Natural killer cell (primary cell): ENCODE measurements at regions of chr4 and their contacts with region 1.

Region 1: GRCh38 chr4:77782102-77782835 is 36.9 kb downstream of the CNOT6L start:
- DNase-seq: no peak
- ATAC-seq: no peak
- H3K4me3 ChIP-seq: no peak overlapping the region
- H3K4me3 Mint-ChIP-seq: peak overlapping the region; percentile 35
- H3K27ac ChIP-seq: peak overlapping the region; percentile 2
- H3K27ac Mint-ChIP-seq: peak overlapping the region; percentile 77 to 86
- H3K4me1 ChIP-seq: peaks cover 15% of the 10 kb centered on the region
- H3K4me1 Mint-ChIP-seq: peaks cover 68 to 72% of the 10 kb centered on the region in 2 donors
- H3K27me3 ChIP-seq: no peaks in the 10 kb centered on the region
- H3K27me3 Mint-ChIP-seq: no peaks in the 10 kb centered on the region
- CTCF ChIP-seq: no peak

Region 2: GRCh38 chr4:77745792-77746191 is 36.5 kb before region 1 on chr4:
- intact Hi-C with region 1: loop called (anchors 5 kb)
- DNase-seq: no peak
- ATAC-seq: no peak
- H3K4me3 ChIP-seq: no peak overlapping the region
- H3K4me3 Mint-ChIP-seq: no peak overlapping the region
- H3K27ac ChIP-seq: no peak overlapping the region
- H3K27ac Mint-ChIP-seq: peak overlapping the region; percentile 49 to 80
- H3K4me1 ChIP-seq: peaks cover 6% of the 10 kb centered on the region
- H3K4me1 Mint-ChIP-seq: peaks cover 41 to 45% of the 10 kb centered on the region in 2 donors
- H3K27me3 ChIP-seq: no peaks in the 10 kb centered on the region
- H3K27me3 Mint-ChIP-seq: no peaks in the 10 kb centered on the region
- CTCF ChIP-seq: no peak

Region 3: DNA sequence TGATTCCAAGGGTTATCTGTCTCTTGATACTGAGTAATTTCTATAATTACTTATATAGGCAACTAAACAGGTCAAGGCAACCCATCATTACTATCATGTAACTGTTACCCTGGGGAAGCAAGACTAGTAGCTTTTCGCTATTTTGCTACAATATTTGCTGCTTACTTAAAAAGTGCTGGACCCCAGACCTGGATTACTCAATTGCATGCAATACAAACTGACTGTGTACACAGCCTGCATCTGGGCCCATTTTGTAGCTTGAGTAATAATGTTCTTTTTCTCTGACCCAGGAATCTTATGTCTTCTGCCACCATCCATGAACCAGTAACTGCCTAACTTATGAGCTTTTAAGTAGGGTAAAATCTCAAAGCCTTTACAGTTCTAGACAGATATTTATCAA is 16.5 kb before region 1 on chr4:
- intact Hi-C with region 1: no loop called
- DNase-seq: no peak
- ATAC-seq: no peak
- H3K4me3 ChIP-seq: no peak overlapping the region
- H3K4me3 Mint-ChIP-seq: no peak overlapping the region
- H3K27ac ChIP-seq: no peak overlapping the region
- H3K27ac Mint-ChIP-seq: peak overlapping the region; percentile 69 to 75
- H3K4me1 ChIP-seq: no peaks in the 10 kb centered on the region
- H3K4me1 Mint-ChIP-seq: peaks cover 47 to 59% of the 10 kb centered on the region in 2 donors
- H3K27me3 ChIP-seq: no peaks in the 10 kb centered on the region
- H3K27me3 Mint-ChIP-seq: no peaks in the 10 kb centered on the region
- CTCF ChIP-seq: no peak